ENCODE measurements at regions of chr16 and their contacts with region 1.

Region 1: DNA sequence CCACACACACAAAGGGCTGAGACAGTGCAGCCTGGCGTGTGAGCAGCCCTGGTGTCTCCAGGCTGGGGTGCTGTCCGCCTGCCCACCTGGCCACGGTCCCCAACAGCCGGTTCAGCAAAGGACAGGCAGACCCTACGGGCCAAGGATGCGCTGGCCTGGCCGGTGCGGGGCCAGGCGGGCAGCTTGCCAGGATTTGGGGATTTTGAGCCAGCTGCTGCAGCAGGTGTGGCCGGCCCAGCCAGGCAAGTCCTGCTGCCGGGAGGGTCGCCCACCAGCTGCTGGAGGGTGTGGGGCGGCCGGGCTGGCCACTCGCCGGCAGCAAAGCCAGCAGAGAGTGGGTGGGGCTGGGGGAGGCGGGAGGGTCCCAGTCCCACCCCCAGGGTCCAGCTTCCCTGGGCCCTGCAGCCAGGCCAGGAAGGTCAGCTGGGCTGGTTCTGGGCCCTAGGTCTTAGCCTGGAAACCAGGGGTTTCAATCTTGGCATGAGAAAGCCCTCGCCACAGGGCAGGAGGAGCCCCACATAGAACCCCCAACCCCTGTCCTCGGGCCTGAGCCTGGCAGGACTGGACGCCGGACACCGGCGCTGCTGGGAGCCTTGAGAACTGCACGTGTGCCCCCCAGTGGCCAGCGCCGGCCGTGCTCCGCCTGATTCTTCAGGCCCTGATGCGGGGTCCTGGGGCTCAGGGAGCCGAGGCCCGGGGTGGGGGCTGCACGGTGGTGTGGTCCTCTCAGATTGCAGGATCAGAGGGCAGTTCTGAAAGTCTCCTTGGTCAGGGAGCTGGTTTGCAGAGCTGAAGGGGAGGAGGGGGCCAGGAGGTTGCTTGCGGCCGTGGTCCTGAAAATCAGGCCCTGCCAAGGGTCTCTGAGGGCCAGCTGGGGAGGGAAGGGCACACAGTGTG is 17.6 kb upstream of the SSTR5 start:
- DNase-seq: no peak
- H3K4me3 ChIP-seq: no peak overlapping the region
- CTCF ChIP-seq: peak; percentile 89

Region 2: DNA sequence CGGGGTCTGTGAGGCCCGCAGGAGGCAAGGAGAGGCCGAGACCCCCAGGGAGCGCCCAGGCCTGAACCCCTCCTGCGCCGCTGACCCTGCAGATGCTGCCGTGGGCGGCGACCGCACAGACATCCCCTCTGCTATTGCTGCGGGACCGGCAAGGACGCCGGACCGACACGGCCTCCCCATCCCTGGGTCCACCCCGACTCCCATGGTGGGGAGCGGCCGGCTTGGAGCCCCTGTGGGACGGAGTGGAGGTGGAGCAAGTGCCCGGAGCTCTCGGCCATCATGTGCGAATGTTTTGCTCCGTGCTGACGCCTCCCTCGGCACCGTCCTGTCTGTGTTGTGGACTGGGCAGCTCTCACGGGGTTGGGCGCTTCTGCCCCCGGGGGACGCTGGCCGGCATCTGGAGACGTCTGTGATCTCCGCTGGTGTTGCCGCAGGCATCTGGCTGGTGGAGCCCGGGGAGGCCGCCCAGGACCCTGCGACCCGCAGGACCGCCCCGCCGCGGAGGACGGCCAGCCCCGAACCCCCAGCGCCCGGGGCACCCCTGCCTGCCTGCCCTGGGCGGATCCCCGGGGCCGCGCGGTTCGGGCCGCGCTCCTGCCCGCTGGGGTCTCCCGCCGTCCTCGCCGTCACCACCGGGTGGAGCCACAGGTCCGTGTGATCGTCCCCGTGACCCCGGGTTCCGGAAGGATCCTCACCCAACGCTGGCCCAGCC is 241.5 kb before region 1 on chr16:
- CTCF ChIA-PET with region 1: interaction called, 48 read pairs
- POLR2A ChIA-PET with region 1: no interaction called
- DNase-seq: no peak
- H3K4me3 ChIP-seq: peak overlapping the region; percentile 23
- CTCF ChIP-seq: peak; percentile 85

Region 3: DNA sequence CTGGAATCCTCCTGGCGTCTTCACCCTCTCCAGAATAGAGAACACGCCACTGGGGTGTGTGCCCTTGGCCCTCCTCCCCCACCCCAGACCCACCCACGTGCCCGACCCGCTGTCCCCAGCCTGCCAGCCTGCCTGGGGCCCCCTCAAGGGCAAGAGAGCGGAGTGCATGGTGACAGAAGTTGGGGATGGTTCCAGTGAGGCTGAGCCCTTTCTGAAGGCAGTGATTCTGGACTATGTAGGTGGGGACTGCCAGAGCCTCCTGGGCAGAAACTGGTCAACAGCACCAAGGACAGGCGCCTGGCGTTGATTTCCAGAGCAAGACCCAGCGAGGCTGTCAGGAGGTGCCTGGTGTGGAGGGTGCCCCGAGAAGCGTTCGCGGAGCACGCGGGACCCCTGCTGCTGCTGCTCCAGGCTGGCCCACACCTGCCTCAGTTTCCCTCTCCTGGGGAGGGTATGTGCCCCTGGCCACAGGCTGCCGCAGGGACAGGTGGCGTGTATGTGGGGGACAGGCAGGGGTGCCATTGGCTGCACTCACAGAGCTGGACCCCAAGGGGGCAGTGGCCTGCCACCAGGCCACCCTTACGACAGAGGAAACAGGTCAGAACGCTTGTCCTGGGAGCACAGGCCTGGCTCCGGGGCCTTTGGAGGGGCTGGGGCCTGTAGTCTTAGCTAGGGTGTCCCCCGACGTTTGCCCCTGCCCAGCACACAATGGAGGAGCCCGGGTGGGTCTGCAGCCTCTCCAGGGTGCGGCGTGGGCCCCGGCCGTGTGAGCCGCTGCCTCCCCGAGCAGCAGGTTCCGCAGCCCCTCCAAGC is 18.9 kb after region 1 on chr16:
- CTCF ChIA-PET with region 1: interaction called, 39 read pairs
- POLR2A ChIA-PET with region 1: no interaction called
- DNase-seq: no peak
- H3K4me3 ChIP-seq: no peak overlapping the region
- CTCF ChIP-seq: no peak

Region 4: GRCh38 chr16:1137604-1138003 is 82.7 kb after region 1 on chr16:
- CTCF ChIA-PET with region 1: no interaction called
- POLR2A ChIA-PET with region 1: no interaction called
- DNase-seq: no peak
- H3K4me3 ChIP-seq: no peak overlapping the region
- CTCF ChIP-seq: no peak

Measured in AG04449 (cell line).